A673 (cell line): ENCODE measurements at regions of chr1 and their contacts with region 1.

Region 1: GRCh38 chr1:156226116-156226538 is 13.3 kb downstream of the PMF1 start:
- DNase-seq: no peak
- H3K4me3 ChIP-seq: no peak overlapping the region
- H3K27ac ChIP-seq: no peak overlapping the region
- H3K4me1 ChIP-seq: no peaks in the 10 kb centered on the region
- H3K27me3 ChIP-seq: no peaks in the 10 kb centered on the region
- CTCF ChIP-seq: no peak

Region 2: DNA sequence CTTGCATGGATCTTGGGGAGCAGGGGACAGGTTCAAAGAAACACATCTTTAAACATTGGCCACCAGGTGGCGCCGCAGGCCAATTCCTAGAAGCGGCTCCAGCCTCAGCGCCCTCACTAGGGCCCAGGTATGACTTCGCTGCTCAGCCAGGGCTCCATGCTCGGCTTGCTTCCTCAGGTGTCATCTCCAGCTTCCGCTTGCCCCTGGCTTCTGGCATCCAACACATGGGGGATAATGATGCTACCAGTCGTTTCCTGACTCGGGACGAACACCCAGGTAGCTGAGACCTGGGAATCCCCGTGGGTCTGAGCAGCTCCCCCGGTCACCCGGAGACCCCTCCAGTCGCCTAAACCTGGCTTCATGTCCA is 135.3 kb before region 1 on chr1:
- CTCF ChIA-PET with region 1: interaction called, 27 read pairs
- POLR2A ChIA-PET with region 1: no interaction called
- intact Hi-C with region 1: loop called (anchors 1 kb)
- DNase-seq: peak; percentile 87
- H3K4me3 ChIP-seq: no peak overlapping the region
- H3K27ac ChIP-seq: no peak overlapping the region
- H3K4me1 ChIP-seq: peaks cover 16% of the 10 kb centered on the region
- H3K27me3 ChIP-seq: no peaks in the 10 kb centered on the region
- CTCF ChIP-seq: peak; percentile 86

Region 3: GRCh38 chr1:156096640-156097391 is 129.3 kb before region 1 on chr1:
- CTCF ChIA-PET with region 1: interaction called, 27 read pairs
- POLR2A ChIA-PET with region 1: no interaction called
- intact Hi-C with region 1: no loop called
- DNase-seq: peak; percentile 90
- H3K4me3 ChIP-seq: no peak overlapping the region
- H3K27ac ChIP-seq: no peak overlapping the region
- H3K4me1 ChIP-seq: peaks cover 15% of the 10 kb centered on the region
- H3K27me3 ChIP-seq: no peaks in the 10 kb centered on the region
- CTCF ChIP-seq: peak; percentile 99

Region 4: GRCh38 chr1:156129706-156130581 is 96.2 kb before region 1 on chr1:
- CTCF ChIA-PET with region 1: no interaction called
- POLR2A ChIA-PET with region 1: no interaction called
- intact Hi-C with region 1: no loop called
- DNase-seq: peak; percentile 97
- H3K4me3 ChIP-seq: no peak overlapping the region
- H3K27ac ChIP-seq: peak overlapping the region; percentile 86
- H3K4me1 ChIP-seq: peaks cover 47% of the 10 kb centered on the region
- H3K27me3 ChIP-seq: no peaks in the 10 kb centered on the region
- CTCF ChIP-seq: peak; percentile 98

Region 5: DNA sequence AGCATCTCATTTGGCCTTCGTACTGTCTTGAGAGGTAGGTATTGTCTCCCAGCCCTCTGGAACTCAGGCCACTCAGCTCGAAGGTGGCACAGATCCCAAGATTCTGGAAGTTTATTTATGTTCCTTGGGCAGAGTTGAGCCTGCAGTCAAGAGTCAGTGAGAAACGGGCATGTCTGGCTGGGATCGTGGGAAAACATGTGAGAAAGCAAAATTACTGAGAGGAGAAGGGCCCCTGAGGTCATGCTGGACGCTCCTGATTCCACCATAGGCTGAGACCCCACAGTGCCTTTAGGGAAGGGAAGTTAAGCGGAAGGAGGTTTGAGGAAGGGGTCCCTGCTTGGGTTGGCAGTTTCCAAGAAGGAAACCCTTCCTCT is 85.3 kb before region 1 on chr1:
- CTCF ChIA-PET with region 1: interaction called, 37 read pairs
- POLR2A ChIA-PET with region 1: interaction called, 4 read pairs
- intact Hi-C with region 1: loop called (anchors 1 kb)
- DNase-seq: no peak
- H3K4me3 ChIP-seq: no peak overlapping the region
- H3K27ac ChIP-seq: no peak overlapping the region
- H3K4me1 ChIP-seq: no peaks in the 10 kb centered on the region
- H3K27me3 ChIP-seq: no peaks in the 10 kb centered on the region
- CTCF ChIP-seq: no peak

Region 6: DNA sequence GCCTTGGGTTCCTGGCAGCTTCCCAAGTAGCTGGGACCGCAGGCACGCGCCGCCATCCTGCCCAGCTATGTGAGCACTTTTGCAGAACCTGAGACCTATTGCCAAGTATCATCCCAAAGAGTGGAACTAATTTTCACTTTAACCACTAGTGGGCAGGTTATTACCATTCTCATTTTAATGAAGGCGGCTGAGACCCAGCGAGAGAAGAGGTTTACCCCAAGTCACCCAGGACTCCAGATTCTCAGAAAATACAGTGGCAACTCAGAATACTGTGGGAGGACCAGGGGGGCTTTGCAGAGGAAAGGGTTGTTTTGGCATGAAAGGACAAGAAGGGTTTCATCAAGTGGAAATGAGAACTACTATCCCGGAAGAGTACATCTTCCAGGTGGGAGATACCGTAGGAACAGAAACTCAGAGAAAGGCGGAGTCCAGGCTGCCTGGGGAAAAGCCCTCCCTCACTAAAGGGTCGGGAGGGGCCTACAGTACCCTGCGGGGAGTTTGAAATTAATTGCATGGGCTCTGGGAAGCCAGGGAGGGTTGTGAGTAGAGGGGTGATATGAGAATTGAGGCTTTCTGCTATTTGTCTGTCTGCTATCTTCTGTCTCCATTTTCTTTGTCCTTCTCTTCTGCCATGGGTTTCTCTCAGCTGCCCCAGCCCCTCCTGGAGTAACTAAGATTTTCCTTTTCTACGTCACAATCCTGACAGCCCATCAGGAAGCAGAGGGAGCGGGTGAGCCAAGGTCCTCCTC is 79.9 kb before region 1 on chr1:
- CTCF ChIA-PET with region 1: interaction called, 37 read pairs
- POLR2A ChIA-PET with region 1: no interaction called
- intact Hi-C with region 1: loop called (anchors 1 kb)
- DNase-seq: peak; percentile 93
- H3K4me3 ChIP-seq: peak overlapping the region; percentile 26
- H3K27ac ChIP-seq: no peak overlapping the region
- H3K4me1 ChIP-seq: peaks cover 10% of the 10 kb centered on the region
- H3K27me3 ChIP-seq: no peaks in the 10 kb centered on the region
- CTCF ChIP-seq: peak; percentile 78

Region 7: DNA sequence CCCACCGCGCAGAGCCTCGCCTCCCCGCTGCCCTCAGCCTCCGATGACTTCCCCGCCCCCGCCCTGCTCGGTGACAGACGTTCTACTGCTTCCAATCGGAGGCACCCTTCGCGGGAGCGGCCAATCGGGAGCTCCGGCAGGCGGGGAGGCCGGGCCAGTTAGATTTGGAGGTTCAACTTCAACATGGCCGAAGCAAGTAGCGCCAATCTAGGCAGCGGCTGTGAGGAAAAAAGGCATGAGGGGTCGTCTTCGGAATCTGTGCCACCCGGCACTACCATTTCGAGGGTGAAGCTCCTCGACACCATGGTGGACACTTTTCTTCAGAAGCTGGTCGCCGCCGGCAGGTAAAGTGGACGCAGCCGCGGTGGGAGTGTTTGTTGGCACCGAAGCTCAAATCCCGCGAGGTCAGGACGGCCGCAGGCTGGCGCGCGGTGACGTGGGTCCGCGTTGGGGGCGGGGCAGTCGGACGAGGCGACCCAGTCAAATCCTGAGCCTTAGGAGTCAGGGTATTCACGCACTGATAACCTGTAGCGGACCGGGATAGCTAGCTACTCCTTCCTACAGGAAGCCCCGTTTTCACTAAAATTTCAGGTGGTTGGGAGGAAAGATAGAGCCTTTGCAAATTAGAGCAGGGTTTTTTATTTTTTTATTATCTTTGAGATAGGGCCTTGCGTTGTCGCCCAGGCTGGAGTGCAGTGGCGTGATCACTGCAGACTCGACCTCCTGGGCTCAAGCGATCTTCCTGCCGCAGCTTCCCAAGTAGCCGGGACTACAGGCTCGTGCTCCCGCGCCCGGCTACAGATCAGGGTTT is 13.1 kb before region 1 on chr1 and contains the start of gene PMF1:
- CTCF ChIA-PET with region 1: interaction called, 10 read pairs
- POLR2A ChIA-PET with region 1: interaction called, 4 read pairs
- intact Hi-C with region 1: no loop called
- DNase-seq: peak; percentile 99
- H3K4me3 ChIP-seq: peak within 1 kb of the TSS; percentile 64
- H3K27ac ChIP-seq: peak within 1 kb of the TSS; percentile 99
- H3K4me1 ChIP-seq: peaks cover 10% of the 10 kb centered on the region
- H3K27me3 ChIP-seq: no peaks in the 10 kb centered on the region
- CTCF ChIP-seq: no peak
- total RNA-seq, gene PMF1: 89.6 and 96.6 TPM in 2 replicates

Region 8: GRCh38 chr1:156368889-156369684 is 143.0 kb after region 1 on chr1 and contains the start of gene RHBG:
- CTCF ChIA-PET with region 1: no interaction called
- POLR2A ChIA-PET with region 1: no interaction called
- intact Hi-C with region 1: no loop called
- DNase-seq: no peak
- H3K4me3 ChIP-seq: peak within 1 kb of the TSS; percentile 35
- H3K27ac ChIP-seq: no peak within 1 kb of the TSS
- H3K4me1 ChIP-seq: no peaks in the 10 kb centered on the region
- H3K27me3 ChIP-seq: no peaks in the 10 kb centered on the region
- CTCF ChIP-seq: no peak
- total RNA-seq, gene RHBG: not detected in 2 replicates